HCT116 (cell line): ENCODE measurements at regions of chr6 and their contacts with region 1.

Region 1: DNA sequence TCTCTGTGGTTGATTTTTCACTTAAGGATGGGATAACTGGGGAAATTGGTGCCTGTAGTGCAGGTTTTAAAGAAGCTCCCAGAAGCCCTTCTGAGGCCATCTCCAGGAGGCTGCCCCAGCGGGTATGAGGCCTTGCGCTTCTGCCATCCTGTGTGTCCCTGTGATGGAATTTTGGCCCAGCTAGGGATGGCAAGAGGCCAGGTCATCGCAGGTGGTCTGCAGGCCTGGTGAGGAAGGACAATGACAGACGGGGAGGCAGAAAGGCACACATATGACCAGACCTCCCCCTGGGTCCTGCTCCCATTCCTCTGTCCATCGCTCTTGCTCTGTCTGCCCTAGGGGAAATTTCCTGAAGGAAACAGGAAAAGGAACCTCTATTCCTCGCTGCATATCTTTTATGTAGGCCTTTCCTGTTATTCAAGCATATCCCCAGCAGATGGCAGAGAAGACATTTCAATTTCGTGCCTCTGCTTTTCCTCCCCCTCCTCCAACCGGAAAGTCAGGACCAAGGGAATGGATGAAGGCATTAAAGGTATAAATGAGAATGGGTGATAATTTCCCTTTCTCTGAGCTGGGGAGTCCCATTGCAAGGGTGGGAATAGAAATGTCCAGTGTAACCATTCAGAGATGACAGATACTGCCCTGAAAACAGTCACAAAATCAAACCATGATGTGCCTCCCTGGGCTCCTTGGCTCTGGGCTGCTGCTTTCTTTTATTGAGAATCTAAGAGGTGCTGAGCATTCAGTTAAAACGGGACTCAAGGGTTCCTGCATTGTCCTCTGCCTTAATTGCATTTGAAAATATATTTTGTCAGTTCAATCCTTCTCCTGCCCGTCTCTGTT is 17.6 kb upstream of the HLA-F start:
- DNase-seq: peak; percentile 48
- ATAC-seq: peak; percentile 71
- H3K4me3 ChIP-seq: no peak overlapping the region
- H3K27ac ChIP-seq: no peak overlapping the region
- H3K4me1 ChIP-seq: peaks cover 0 to 3% of the 10 kb centered on the region in 2 experiments; a peak in 1 of 4 replicates
- H3K27me3 ChIP-seq: peaks cover 5% of the 10 kb centered on the region; the same call in 1 of the 2 replicates
- CTCF ChIP-seq: peak; percentile 64 to 83 (median 71); a peak in 5 of 6 replicates
- POLR2A ChIP-seq: no peak
- RAD21 ChIP-seq: peak; percentile 93

Region 2: DNA sequence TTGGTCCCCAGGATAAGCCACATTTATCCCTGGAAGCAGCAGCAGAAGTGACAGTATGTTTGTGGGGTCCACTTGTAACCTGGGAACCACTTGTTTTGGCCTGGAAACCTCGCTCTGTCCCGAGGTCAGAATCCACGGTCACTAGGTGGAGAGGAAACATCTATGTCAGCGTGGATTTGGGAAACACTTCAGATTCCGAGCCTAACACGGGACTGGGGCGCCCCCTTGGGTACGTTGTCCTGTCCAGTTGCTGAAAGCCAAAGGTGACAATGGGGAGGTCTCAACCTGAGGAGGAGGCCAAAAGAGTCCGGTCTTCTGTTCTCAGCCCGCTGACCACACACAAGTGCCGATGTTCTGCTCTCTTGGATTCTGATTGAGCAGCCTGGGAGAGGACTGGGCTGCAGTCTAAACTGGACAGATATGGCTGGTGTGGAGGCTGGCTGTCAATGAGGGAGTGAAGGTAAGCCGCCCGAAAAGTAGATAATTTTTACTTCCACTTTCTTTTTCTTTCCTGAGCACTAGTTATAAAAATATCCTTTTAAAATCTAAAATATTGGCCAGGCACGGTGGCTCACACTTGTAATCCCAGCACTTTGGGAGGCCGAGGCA is 19.8 kb before region 1 on chr6:
- CTCF ChIA-PET with region 1: no interaction called
- POLR2A ChIA-PET with region 1: no interaction called
- RAD21 ChIA-PET with region 1: no interaction called
- intact Hi-C with region 1: no loop called
- DNase-seq: no peak
- ATAC-seq: no peak
- H3K4me3 ChIP-seq: no peak overlapping the region
- H3K27ac ChIP-seq: no peak overlapping the region
- H3K4me1 ChIP-seq: no peaks in the 10 kb centered on the region
- H3K27me3 ChIP-seq: no peaks in the 10 kb centered on the region
- CTCF ChIP-seq: no peak
- POLR2A ChIP-seq: no peak
- RAD21 ChIP-seq: no peak; the same call in 1 of the 2 replicates

Region 3: GRCh38 chr6:29752451-29753308 is 47.1 kb after region 1 on chr6:
- CTCF ChIA-PET with region 1: interaction called, 3 read pairs
- POLR2A ChIA-PET with region 1: no interaction called
- RAD21 ChIA-PET with region 1: no interaction called
- intact Hi-C with region 1: loop called (anchors 5 kb)
- DNase-seq: peak; percentile 90
- ATAC-seq: peak; percentile 79
- H3K4me3 ChIP-seq: peak overlapping the region; percentile 63 to 83
- H3K27ac ChIP-seq: peak overlapping the region; percentile 74
- H3K4me1 ChIP-seq: peaks cover 2 to 27% of the 10 kb centered on the region in 2 experiments; a peak in 3 of 4 replicates
- H3K27me3 ChIP-seq: no peaks in the 10 kb centered on the region
- CTCF ChIP-seq: peak; percentile 98 to 99 (median 99)
- POLR2A ChIP-seq: peak; percentile 16
- RAD21 ChIP-seq: peak; percentile 81

Region 4: GRCh38 chr6:29834564-29835436 is 129.2 kb after region 1 on chr6:
- CTCF ChIA-PET with region 1: interaction called, 7 read pairs
- POLR2A ChIA-PET with region 1: no interaction called
- RAD21 ChIA-PET with region 1: interaction called in 1 of 2 experiments, 3 read pairs
- intact Hi-C with region 1: loop called (anchors 1 kb)
- DNase-seq: no peak
- ATAC-seq: peak; percentile 91
- H3K4me3 ChIP-seq: no peak overlapping the region
- H3K27ac ChIP-seq: no peak overlapping the region
- H3K4me1 ChIP-seq: no peaks in the 10 kb centered on the region
- H3K27me3 ChIP-seq: peaks cover 3% of the 10 kb centered on the region; the same call in 1 of the 2 replicates
- CTCF ChIP-seq: peak; percentile 93 to 96 (median 93)
- POLR2A ChIP-seq: no peak
- RAD21 ChIP-seq: peak; percentile 98

Region 5: GRCh38 chr6:30013291-30013922 is 307.8 kb after region 1 on chr6:
- CTCF ChIA-PET with region 1: no interaction called
- POLR2A ChIA-PET with region 1: no interaction called
- RAD21 ChIA-PET with region 1: no interaction called
- intact Hi-C with region 1: loop called (anchors 2 kb)
- DNase-seq: no peak
- ATAC-seq: peak; percentile 80
- H3K4me3 ChIP-seq: no peak overlapping the region
- H3K27ac ChIP-seq: no peak overlapping the region
- H3K4me1 ChIP-seq: no peaks in the 10 kb centered on the region
- H3K27me3 ChIP-seq: no peaks in the 10 kb centered on the region
- CTCF ChIP-seq: peak; percentile 77 to 91 (median 83); a peak in 5 of 6 replicates
- POLR2A ChIP-seq: no peak
- RAD21 ChIP-seq: peak; percentile 89

Region 6: DNA sequence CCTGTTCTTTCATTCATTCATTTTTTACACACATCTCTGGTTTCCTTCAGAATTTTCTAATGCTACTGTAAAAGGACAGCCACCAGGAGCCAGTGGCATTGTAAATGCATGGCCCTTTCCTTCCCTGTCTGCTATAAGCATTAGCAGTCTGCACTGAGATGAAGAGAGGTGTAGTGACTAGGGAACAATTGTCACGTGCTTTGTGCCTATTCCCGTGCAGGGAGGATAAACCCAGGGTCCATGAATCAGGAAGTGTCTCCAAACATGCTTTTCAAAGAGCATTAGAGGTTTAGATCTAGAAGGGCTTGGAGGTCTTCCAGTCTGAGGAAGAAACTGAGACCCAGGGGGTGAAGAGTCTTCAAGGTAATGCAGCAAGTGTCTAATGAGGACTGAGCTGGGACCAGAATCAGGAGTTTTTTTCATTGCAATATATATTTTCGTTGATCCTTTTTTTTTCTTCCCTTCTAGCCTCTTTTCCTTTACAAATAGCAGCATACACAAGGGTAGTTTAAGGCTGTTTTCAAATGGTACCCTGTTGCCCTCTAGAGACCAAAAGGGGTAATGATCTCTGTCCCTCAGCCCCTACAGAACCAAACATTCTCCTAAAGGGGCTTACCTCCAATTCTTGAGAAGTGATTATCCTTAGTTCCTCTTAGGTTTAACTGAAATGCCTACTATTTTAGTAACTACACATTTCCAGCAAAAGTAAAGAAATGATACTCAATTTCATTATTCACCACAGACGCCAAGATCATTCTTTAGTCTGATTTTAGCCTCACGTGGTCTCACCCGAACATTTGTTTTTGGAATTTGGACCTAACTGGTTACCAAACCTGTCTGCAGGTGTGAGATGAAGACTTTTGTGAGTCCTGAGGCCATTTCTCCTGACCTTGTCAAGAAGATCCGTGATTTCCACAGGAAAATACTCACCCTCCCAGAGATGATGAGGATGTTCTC is 464.3 kb after region 1 on chr6:
- CTCF ChIA-PET with region 1: no interaction called
- POLR2A ChIA-PET with region 1: no interaction called
- RAD21 ChIA-PET with region 1: no interaction called
- intact Hi-C with region 1: no loop called
- DNase-seq: peak; percentile 51
- ATAC-seq: peak; percentile 99
- H3K4me3 ChIP-seq: no peak overlapping the region
- H3K27ac ChIP-seq: no peak overlapping the region
- H3K4me1 ChIP-seq: no peaks in the 10 kb centered on the region
- H3K27me3 ChIP-seq: no peaks in the 10 kb centered on the region
- CTCF ChIP-seq: peak; percentile 83 to 89 (median 88)
- POLR2A ChIP-seq: no peak
- RAD21 ChIP-seq: peak; percentile 93